ENCODE measurements at regions of chr3 and their contacts with region 1.

Region 1: DNA sequence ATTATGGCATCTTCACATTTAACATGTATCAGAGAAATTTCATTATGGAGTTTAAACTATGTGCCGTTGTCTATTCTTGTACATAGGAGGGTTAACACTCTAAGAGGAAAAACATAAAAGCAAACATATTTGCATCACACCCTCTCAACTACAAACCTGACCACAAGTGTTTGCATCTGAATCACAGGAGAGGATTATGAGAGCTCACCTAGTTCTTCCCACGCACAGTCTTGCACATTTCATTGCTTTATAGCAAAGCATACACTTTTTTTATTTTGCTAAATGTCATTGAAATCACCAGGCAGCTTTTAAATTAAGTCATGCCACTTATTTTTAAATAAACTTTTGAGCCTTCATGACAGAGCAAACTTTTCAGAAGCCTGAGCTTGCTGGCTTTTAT is 12.5 kb downstream of the TRAT1 start:
- DNase-seq: peak; percentile 40
- H3K4me3 Mint-ChIP-seq: peak overlapping the region; percentile 77
- H3K27ac Mint-ChIP-seq: peak overlapping the region; percentile 95
- H3K4me1 Mint-ChIP-seq: peaks cover 81% of the 10 kb centered on the region
- H3K27me3 Mint-ChIP-seq: no peaks in the 10 kb centered on the region

Region 2: DNA sequence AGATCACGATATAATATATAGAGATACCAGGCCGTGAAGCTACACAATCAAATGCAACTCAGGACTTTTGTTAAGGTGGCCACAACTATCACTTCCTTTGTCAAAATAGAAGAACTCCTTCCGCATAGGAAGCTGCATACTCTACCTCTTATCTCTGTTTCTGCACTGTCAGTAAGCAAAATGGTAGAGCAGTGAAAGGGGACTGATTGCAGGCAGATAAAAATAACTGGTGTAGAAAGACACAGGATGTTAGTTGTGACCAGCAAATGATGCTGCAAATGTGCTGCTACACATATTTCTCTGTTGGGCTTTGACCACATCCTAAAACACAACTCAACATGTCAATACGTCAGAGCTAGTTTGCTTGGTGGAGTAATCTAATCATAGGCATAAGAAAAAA is 28.8 kb before region 1 on chr3:
- CTCF ChIA-PET with region 1: interaction called, 4 read pairs
- POLR2A ChIA-PET with region 1: interaction called, 17 read pairs
- DNase-seq: peak; percentile 59
- H3K4me3 Mint-ChIP-seq: peak overlapping the region; percentile 12
- H3K27ac Mint-ChIP-seq: peak overlapping the region; percentile 92
- H3K4me1 Mint-ChIP-seq: peaks cover 36% of the 10 kb centered on the region
- H3K27me3 Mint-ChIP-seq: no peaks in the 10 kb centered on the region

Region 3: DNA sequence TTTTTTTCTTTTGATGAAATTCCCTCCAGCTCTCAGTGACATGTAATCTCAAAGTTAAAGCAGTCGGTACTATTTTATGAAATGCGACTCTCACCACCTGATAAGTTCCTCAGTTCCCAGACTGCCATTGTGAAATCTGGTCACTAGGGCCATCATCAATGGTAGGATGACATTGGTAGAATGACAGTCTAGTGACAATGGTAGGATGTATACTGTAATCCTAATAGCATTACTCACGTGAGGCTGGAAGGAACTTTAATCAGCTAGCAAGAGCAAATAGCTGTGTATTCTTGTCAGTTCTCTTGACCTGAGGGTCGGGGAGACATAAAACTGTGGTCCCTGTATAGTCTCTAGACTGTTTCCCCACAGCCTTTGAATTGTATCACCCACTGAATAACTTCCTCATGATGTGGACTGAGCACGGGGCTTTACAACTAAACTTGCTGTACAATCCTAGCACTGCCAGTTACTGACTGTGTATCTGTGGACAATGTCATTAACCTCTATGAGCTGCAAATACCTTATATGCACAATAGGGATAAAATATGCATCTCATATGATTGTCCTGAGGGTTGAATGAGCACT is 10.7 kb after region 1 on chr3:
- CTCF ChIA-PET with region 1: interaction called, 6 read pairs
- POLR2A ChIA-PET with region 1: interaction called, 260 read pairs
- DNase-seq: no peak
- H3K4me3 Mint-ChIP-seq: no peak overlapping the region
- H3K27ac Mint-ChIP-seq: peak overlapping the region; percentile 82
- H3K4me1 Mint-ChIP-seq: peaks cover 78% of the 10 kb centered on the region
- H3K27me3 Mint-ChIP-seq: no peaks in the 10 kb centered on the region

Region 4: DNA sequence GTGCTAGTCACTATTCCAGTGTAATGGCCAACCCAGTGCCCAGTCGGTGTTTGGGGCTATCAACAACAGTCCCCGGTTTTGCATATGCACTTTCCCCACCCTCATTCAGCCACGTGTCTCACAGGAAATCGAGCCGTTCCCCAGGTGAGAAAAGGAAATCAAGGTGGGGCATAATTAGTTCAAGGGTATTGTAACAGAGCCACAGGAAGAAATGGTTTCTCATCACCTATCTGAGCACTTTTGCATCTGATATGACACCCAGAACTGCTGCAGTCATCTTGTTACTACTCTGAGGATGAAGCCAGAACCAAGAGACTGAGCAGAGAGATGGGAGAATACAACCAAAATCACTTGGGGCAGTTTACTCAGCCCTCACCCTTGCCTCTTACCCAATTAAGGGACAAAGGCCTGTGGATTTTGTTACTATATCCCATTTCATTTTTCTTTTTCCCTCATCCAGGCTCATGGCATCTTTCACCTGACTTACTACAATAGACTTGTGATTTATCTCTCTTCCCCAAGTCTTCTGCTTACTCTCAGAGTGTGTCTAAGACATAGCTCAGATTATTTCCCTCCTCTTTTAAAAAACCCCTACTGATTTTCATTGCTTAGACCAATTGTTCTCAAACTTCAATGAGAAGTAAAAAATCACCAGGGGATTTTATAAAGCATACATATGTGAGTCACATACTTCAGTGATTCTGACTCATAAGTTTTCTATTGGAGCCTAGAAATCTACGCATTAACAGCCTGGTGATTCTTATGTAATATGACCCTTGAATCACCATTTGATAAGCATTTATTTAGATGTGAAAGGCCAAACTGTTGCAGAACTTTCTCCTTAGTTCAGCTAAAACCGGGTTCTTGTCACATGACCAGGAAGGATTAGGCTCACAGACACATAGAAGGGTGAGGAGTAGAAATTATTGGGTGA is 28.0 kb after region 1 on chr3:
- CTCF ChIA-PET with region 1: interaction called, 3 read pairs
- POLR2A ChIA-PET with region 1: interaction called, 12 read pairs
- DNase-seq: peak; percentile 31
- H3K4me3 Mint-ChIP-seq: no peak overlapping the region
- H3K27ac Mint-ChIP-seq: peak overlapping the region; percentile 74
- H3K4me1 Mint-ChIP-seq: peaks cover 50% of the 10 kb centered on the region
- H3K27me3 Mint-ChIP-seq: no peaks in the 10 kb centered on the region